ENCODE measurements at regions of chrX and their contacts with region 1.

Region 1: GRCh38 chrX:103533511-103534216 is 14.4 kb upstream of the RAB40A start:
- DNase-seq: peak; percentile 56 to 67
- ATAC-seq: peak; percentile 71 to 81 (median 75)
- H3K4me3 ChIP-seq: peak overlapping the region in 9 of 10 donors; percentile 5 to 57 (median 49)
- H3K27ac ChIP-seq: no peak overlapping the region
- H3K4me1 ChIP-seq: no peaks in the 10 kb centered on the region
- H3K27me3 ChIP-seq: peaks cover 0 to 20% (median 0%) of the 10 kb centered on the region in 7 donors
- CTCF ChIP-seq: peak; percentile 54 to 87 (median 74)

Region 2: GRCh38 chrX:103674531-103675454 is 141.1 kb after region 1 on chrX:
- intact Hi-C with region 1: loop called in 1 of 10 experiments (anchors 10 kb)
- DNase-seq: no peak
- ATAC-seq: peak in 1 of 8 donors; percentile 25
- H3K4me3 ChIP-seq: no peak overlapping the region
- H3K27ac ChIP-seq: no peak overlapping the region
- H3K4me1 ChIP-seq: peaks cover 0 to 10% (median 0%) of the 10 kb centered on the region in 9 donors
- H3K27me3 ChIP-seq: peaks cover 0 to 5% (median 0%) of the 10 kb centered on the region in 7 donors
- CTCF ChIP-seq: no peak

Region 3: GRCh38 chrX:103697687-103698086 is 164.0 kb after region 1 on chrX:
- intact Hi-C with region 1: loop called in 1 of 10 experiments (anchors 10 kb)
- DNase-seq: no peak
- ATAC-seq: no peak
- H3K4me3 ChIP-seq: no peak overlapping the region
- H3K27ac ChIP-seq: no peak overlapping the region
- H3K4me1 ChIP-seq: no peaks in the 10 kb centered on the region
- H3K27me3 ChIP-seq: peaks cover 0 to 15% (median 0%) of the 10 kb centered on the region in 7 donors
- CTCF ChIP-seq: no peak

Region 4: GRCh38 chrX:103817502-103817901 is 283.8 kb after region 1 on chrX:
- intact Hi-C with region 1: loop called in 9 of 10 experiments (anchors 2 to 10 kb)
- DNase-seq: peak in 1 of 2 donors; percentile 6
- ATAC-seq: no peak
- H3K4me3 ChIP-seq: no peak overlapping the region
- H3K27ac ChIP-seq: no peak overlapping the region
- H3K4me1 ChIP-seq: no peaks in the 10 kb centered on the region
- H3K27me3 ChIP-seq: peaks cover 0 to 34% (median 0%) of the 10 kb centered on the region in 7 donors
- CTCF ChIP-seq: peak; percentile 48 to 89 (median 70)